Activated B cell treated with CpG ODN at 0.5 μM for 24 hours (primary cell): ENCODE measurements at regions of chr15 and their contacts with region 1.

Region 1: DNA sequence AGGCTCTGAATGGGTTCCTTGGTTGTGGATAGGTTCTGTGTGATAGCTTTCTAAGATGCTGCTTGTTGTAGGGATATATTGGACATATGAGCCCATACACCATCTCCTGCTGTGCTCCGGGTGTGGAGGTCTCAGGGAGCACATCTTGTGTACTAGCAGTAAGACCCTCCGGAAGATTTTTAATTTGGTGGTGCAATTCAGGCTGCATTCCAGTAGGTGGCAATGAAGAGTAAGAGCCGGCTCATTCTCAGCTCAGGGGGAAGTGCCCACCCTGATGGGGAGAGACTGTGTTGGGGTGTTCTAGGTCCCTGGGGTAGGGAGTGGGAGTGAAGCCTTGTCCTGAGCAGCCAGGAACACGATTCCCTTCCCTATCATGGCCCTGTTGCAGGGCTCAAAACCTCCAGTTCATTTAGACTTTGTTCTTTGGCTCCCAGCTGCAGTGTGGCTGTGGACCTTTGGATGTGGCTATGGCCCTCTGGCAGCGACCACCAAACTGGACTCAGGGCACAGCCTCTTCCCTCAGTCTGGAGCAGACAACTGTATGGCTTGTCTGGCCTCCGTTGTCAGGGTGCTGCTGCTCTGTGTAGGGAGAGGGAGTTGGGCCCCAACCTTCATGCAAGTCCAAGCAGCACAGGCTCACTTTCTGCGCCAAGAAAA is 104.7 kb downstream of the UNC13C start:
- DNase-seq: no peak
- ATAC-seq: no peak
- H3K4me3 Mint-ChIP-seq: no peak overlapping the region
- H3K27ac Mint-ChIP-seq: no peak overlapping the region
- H3K4me1 Mint-ChIP-seq: no peaks in the 10 kb centered on the region
- H3K27me3 Mint-ChIP-seq: no peaks in the 10 kb centered on the region
- CTCF ChIP-seq: no peak

Region 2: GRCh38 chr15:55108858-55109518 is 1026.0 kb after region 1 on chr15:
- CTCF ChIA-PET with region 1: no interaction called
- POLR2A ChIA-PET with region 1: no interaction called
- intact Hi-C with region 1: loop called (anchors 5 kb)
- DNase-seq: no peak
- ATAC-seq: no peak
- H3K4me3 Mint-ChIP-seq: no peak overlapping the region
- H3K27ac Mint-ChIP-seq: no peak overlapping the region
- H3K4me1 Mint-ChIP-seq: no peaks in the 10 kb centered on the region
- H3K27me3 Mint-ChIP-seq: peaks cover 5% of the 10 kb centered on the region
- CTCF ChIP-seq: no peak